Activated B cell treated with CpG ODN at 0.5 μM for 24 hours (primary cell): ENCODE measurements at regions of chr12 and their contacts with region 1.

Region 1: DNA sequence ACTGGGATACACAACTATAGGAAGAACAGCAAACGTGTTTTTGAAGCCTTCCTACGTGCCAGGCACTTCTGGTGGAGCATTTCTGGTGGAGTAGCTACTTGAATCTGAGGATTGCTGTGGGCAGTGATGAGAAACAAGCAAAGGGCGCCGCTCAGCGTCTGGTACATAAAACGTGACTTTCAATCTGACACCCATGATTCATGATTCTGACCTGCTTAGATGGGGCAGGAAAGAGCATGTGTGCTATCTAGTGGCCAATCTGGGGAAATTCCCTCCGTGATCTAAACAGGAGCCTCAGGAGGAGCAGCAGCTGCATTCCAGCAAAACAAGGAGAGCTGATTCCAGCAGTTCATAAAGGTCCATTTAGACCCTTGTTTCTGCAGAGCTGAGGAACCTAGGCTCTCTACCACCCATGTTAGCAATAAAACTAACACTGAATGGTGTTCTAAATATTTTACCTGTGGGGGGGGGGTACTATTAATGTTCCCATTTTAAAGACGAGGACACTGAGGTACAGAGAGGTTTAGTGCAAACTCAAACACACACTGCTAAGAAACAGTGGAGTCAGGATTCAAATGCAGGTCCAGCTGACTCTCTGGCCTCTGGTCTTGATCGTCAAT is 37.8 kb downstream of the PAH start:
- DNase-seq: no peak
- ATAC-seq: peak; percentile 60
- H3K4me3 Mint-ChIP-seq: no peak overlapping the region
- H3K27ac Mint-ChIP-seq: no peak overlapping the region
- H3K4me1 Mint-ChIP-seq: peaks cover 3% of the 10 kb centered on the region
- H3K27me3 Mint-ChIP-seq: peaks cover 18% of the 10 kb centered on the region
- CTCF ChIP-seq: no peak

Region 2: GRCh38 chr12:103326190-103326589 is 446.9 kb after region 1 on chr12:
- CTCF ChIA-PET with region 1: no interaction called
- POLR2A ChIA-PET with region 1: no interaction called
- intact Hi-C with region 1: loop called (anchors 2 kb)
- DNase-seq: no peak
- ATAC-seq: peak; percentile 42
- H3K4me3 Mint-ChIP-seq: no peak overlapping the region
- H3K27ac Mint-ChIP-seq: no peak overlapping the region
- H3K4me1 Mint-ChIP-seq: no peaks in the 10 kb centered on the region
- H3K27me3 Mint-ChIP-seq: no peaks in the 10 kb centered on the region
- CTCF ChIP-seq: no peak